ENCODE measurements at regions of chr11 and their contacts with region 1.

Region 1: DNA sequence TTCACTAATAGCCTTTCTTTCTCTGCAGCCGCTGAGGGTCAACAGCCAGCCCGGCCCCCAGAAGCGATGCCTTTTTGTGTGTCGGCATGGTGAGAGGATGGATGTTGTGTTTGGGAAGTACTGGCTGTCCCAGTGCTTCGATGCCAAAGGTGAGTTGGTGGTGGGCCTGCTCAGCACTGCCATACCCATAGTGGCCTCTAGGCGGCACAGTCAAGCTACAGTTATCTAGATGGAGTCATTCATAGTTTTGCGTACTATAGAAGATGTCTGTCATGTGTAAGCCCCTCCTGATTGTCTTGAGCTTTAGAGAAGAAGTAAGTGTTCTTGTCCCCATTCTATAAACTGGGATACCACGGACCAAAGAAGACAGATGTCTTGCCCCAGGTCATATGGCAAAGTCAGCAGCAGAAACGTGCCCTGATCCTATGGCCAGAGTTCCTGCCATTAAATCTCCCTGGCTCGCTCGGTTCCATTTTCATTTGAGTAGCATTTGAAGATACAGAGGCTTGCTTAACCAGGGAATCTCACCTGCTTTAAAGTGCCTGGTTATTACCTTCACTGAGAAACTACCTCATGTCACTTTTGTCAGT is 42.1 kb upstream of the CRTAM start:
- DNase-seq: peak; percentile 76
- ATAC-seq: peak; percentile 86
- H3K4me3 Mint-ChIP-seq: no peak overlapping the region
- H3K27ac Mint-ChIP-seq: no peak overlapping the region
- H3K4me1 Mint-ChIP-seq: no peaks in the 10 kb centered on the region
- H3K27me3 Mint-ChIP-seq: no peaks in the 10 kb centered on the region

Region 2: DNA sequence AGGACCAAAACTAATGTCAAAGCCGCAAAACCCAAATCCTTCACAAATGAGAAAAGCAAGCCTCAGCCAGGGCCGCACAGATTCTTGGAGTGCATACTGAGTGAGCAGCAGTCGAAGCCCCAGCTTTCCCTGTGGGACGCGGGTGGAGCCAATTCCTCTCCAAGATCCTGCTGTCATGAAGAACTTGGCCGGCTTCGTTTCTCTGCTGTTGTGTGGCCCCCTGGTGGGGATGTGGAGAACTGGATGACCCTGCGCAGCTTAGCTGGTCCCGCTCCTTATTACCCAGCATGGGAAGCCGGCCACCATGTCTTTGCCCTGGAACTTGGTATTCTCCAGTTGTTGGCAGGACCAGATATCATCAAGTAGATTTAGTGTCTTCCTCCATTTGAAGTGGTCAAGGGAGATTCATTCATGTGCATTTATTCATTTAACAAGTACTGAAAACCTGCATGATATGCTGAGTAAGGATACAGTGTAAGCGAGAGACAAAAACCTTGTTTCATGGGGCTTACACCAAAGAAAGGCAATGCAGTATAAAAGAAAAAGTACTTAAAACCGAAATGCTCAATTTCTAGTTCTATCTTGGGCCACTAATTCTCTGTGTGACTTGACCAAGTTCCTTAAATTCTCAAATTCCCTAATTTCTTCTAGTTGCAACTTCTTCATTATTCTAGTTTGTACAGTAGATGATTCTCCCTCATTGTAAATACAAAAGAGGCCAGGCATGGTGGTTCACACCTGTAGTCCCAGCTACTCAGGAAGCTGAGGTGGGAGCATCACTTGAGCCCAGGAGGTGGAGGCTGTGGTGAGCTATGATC is 14.6 kb before region 1 on chr11:
- CTCF ChIA-PET with region 1: interaction called, 22 read pairs
- POLR2A ChIA-PET with region 1: no interaction called
- DNase-seq: peak; percentile 80
- ATAC-seq: peak; percentile 89
- H3K4me3 Mint-ChIP-seq: no peak overlapping the region
- H3K27ac Mint-ChIP-seq: no peak overlapping the region
- H3K4me1 Mint-ChIP-seq: peaks cover 33% of the 10 kb centered on the region
- H3K27me3 Mint-ChIP-seq: no peaks in the 10 kb centered on the region

Region 3: DNA sequence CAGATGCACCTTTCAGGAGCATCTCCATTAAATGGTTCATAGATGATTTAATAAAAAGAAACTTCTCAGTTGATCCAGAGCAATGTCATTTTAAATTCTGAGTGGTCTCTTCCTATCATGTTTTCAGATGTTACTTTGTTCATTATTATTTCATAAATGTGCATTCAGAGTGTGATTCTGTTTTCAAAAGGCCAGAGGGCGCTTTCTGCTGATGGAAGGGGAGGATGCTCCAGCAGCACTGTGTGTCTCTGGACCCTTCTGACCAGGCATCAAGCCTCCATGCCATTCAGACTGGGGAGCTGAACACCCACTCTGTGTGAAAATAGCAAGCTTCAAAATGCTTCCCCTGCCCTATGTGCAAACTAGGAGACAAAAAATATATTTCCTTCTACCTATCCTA is 18.2 kb after region 1 on chr11:
- CTCF ChIA-PET with region 1: interaction called, 40 read pairs
- POLR2A ChIA-PET with region 1: interaction called, 4 read pairs
- DNase-seq: peak; percentile 30
- ATAC-seq: no peak
- H3K4me3 Mint-ChIP-seq: no peak overlapping the region
- H3K27ac Mint-ChIP-seq: no peak overlapping the region
- H3K4me1 Mint-ChIP-seq: peaks cover 41% of the 10 kb centered on the region
- H3K27me3 Mint-ChIP-seq: no peaks in the 10 kb centered on the region

Region 4: DNA sequence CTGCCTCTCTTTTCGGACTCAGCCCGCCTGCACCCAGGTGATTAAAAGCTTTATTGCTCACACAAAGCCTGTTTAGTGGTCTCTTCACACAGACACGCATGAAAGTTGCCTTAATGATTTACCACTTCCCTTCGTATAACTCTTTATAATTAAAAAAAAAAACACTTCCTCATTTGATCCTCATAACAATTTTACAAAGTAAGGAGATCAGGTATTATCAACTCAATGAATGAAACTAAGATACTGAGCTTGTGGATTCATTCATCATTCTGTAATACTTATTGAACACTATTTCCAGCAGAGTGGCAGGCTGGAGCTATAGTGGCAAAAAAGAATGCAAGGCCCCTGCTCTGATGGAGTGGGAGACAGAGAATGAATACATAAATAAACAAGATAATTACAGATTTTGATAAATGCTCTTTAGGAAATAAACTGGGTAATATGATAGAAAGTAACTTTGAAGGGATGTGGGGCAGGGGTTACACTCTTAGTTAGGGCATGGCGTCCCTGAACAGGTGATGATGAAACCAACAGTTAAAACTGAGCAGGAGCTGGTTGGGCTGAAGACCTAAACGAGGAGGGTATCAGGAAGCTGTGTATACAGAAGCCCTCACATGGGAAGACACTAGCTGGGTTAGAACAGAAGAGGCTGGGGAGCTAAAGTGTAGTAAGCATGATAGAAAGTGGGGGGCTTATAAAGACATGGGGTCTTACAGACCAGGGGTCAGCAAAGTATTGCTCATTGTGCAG is 36.7 kb after region 1 on chr11:
- CTCF ChIA-PET with region 1: interaction called, 35 read pairs
- POLR2A ChIA-PET with region 1: interaction called, 4 read pairs
- DNase-seq: no peak
- ATAC-seq: peak; percentile 33
- H3K4me3 Mint-ChIP-seq: no peak overlapping the region
- H3K27ac Mint-ChIP-seq: peak overlapping the region; percentile 44
- H3K4me1 Mint-ChIP-seq: peaks cover 24% of the 10 kb centered on the region
- H3K27me3 Mint-ChIP-seq: no peaks in the 10 kb centered on the region

Region 5: GRCh38 chr11:122933416-122933815 is 137.2 kb after region 1 on chr11:
- CTCF ChIA-PET with region 1: no interaction called
- POLR2A ChIA-PET with region 1: no interaction called
- DNase-seq: no peak
- ATAC-seq: no peak
- H3K4me3 Mint-ChIP-seq: no peak overlapping the region
- H3K27ac Mint-ChIP-seq: no peak overlapping the region
- H3K4me1 Mint-ChIP-seq: no peaks in the 10 kb centered on the region
- H3K27me3 Mint-ChIP-seq: no peaks in the 10 kb centered on the region

Region 6: DNA sequence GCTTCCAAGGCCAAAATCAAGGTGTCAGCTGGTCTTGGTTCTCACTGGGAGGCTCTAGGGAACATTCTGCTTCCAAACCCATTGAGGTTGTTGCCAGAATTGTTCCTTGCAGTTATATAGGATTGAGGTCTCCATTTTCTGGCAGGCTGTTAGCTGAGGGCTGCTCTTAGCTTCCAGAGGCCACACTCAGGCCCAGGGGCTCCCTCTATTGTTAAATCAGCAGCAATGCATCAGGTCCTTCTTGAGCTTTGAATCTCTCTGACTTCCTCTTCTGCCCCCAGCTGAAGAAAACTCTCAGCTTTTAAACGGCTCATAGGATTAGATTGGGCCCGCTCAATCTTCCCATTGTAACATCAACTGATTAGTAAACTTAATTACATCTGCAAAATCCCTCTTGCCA is 224.7 kb after region 1 on chr11:
- CTCF ChIA-PET with region 1: interaction called, 22 read pairs
- POLR2A ChIA-PET with region 1: no interaction called
- DNase-seq: peak; percentile 53
- ATAC-seq: peak; percentile 74
- H3K4me3 Mint-ChIP-seq: no peak overlapping the region
- H3K27ac Mint-ChIP-seq: no peak overlapping the region
- H3K4me1 Mint-ChIP-seq: peaks cover 7% of the 10 kb centered on the region
- H3K27me3 Mint-ChIP-seq: peaks cover 16% of the 10 kb centered on the region

Region 7: GRCh38 chr11:123122341-123122740 is 326.1 kb after region 1 on chr11:
- CTCF ChIA-PET with region 1: no interaction called
- POLR2A ChIA-PET with region 1: no interaction called
- DNase-seq: no peak
- ATAC-seq: no peak
- H3K4me3 Mint-ChIP-seq: no peak overlapping the region
- H3K27ac Mint-ChIP-seq: no peak overlapping the region
- H3K4me1 Mint-ChIP-seq: peaks cover 4% of the 10 kb centered on the region
- H3K27me3 Mint-ChIP-seq: peaks cover 3% of the 10 kb centered on the region